ENCODE measurements at regions of chr3 and their contacts with region 1.

Region 1: DNA sequence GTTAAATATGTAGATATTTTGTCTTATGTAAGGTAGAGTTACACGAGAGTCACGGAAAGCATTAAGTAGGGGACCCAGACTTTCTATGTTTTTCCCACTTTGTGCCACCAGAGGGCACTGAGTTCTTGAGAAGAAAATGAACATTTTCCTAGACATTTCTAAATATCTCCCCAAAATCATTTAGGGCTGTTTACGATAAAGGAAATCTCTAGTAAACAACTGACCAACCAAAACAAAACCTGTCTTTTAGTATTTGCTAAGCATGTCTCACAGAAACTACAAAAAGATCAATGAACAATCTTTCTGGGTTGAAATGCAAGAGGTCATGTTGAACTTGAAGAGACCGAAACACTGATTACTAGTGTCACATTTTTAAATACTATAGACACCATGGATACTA is 16.1 kb downstream of the POU1F1 start:
- DNase-seq: peak; percentile 68 to 79 (median 73)
- H3K4me3 ChIP-seq: no peak overlapping the region
- H3K27ac ChIP-seq: no peak overlapping the region
- H3K4me1 ChIP-seq: peaks cover 0 to 2% (median 0%) of the 10 kb centered on the region in 4 experiments
- H3K27me3 ChIP-seq: no peaks in the 10 kb centered on the region

Region 2: GRCh38 chr3:87248831-87249230 is 11.4 kb before region 1 on chr3:
- CTCF ChIA-PET with region 1: interaction called, 17 read pairs
- POLR2A ChIA-PET with region 1: no interaction called
- DNase-seq: no peak
- H3K4me3 ChIP-seq: no peak overlapping the region
- H3K27ac ChIP-seq: no peak overlapping the region
- H3K4me1 ChIP-seq: no peaks in the 10 kb centered on the region
- H3K27me3 ChIP-seq: no peaks in the 10 kb centered on the region

Region 3: DNA sequence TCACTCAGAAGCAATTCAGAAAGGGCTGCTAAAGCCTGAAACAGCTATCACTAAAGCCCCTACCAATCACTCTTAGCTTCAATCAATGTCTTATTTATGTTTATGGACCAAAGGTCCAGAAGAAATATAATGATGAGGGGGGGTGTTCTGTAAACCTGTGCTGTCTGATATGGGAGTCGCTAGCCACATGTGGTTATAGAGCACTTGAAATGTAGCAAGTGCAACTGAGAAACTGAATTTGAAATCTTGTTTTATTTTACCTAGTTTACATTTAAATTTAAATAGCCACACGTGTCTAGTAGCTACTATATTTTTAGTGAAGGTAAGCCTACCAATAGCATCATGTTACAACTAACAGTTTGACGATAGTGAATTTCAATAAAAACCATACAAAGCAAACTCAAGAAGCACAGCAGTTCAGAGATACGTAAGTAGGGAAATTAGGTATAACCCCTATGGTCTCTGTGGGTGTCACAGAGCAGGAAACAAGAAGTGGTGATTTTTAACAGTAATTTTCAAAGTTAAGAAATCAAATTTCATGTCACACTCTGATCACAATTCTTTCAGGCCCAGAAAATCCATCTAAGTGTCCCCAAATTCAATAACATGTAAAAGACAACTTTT is 12.6 kb after region 1 on chr3:
- CTCF ChIA-PET with region 1: interaction called, 33 read pairs
- POLR2A ChIA-PET with region 1: no interaction called
- DNase-seq: no peak
- H3K4me3 ChIP-seq: no peak overlapping the region
- H3K27ac ChIP-seq: no peak overlapping the region
- H3K4me1 ChIP-seq: peaks cover 3 to 42% (median 27%) of the 10 kb centered on the region in 4 experiments
- H3K27me3 ChIP-seq: no peaks in the 10 kb centered on the region

Region 4: GRCh38 chr3:87380761-87381160 is 120.5 kb after region 1 on chr3:
- CTCF ChIA-PET with region 1: no interaction called
- POLR2A ChIA-PET with region 1: no interaction called
- DNase-seq: no peak
- H3K4me3 ChIP-seq: no peak overlapping the region
- H3K27ac ChIP-seq: no peak overlapping the region
- H3K4me1 ChIP-seq: no peaks in the 10 kb centered on the region
- H3K27me3 ChIP-seq: no peaks in the 10 kb centered on the region